Activated naive CD4-positive, alpha-beta T cell treated with anti-CD3 and anti-CD28 coated beads for 36 hours (primary cell): ENCODE measurements at regions of chr15 and their contacts with region 1.

Region 1: GRCh38 chr15:45587095-45587860 is at the start of gene BLOC1S6:
- DNase-seq: peak; percentile 91
- H3K4me3 Mint-ChIP-seq: peak within 1 kb of the TSS; percentile 100
- H3K27ac Mint-ChIP-seq: peak within 1 kb of the TSS; percentile 100
- H3K4me1 Mint-ChIP-seq: peaks cover 41% of the 10 kb centered on the region
- H3K27me3 Mint-ChIP-seq: no peaks in the 10 kb centered on the region
- total RNA-seq, gene BLOC1S6: 36.8 to 42.8 TPM

Region 2: GRCh38 chr15:45429974-45430792 is 157.1 kb before region 1 on chr15:
- CTCF ChIA-PET with region 1: interaction called, 15 read pairs
- intact Hi-C with region 1: no loop called
- DNase-seq: peak; percentile 83
- H3K4me3 Mint-ChIP-seq: peak overlapping the region; percentile 51
- H3K27ac Mint-ChIP-seq: no peak overlapping the region
- H3K4me1 Mint-ChIP-seq: peaks cover 2% of the 10 kb centered on the region
- H3K27me3 Mint-ChIP-seq: peaks cover 4% of the 10 kb centered on the region

Region 3: DNA sequence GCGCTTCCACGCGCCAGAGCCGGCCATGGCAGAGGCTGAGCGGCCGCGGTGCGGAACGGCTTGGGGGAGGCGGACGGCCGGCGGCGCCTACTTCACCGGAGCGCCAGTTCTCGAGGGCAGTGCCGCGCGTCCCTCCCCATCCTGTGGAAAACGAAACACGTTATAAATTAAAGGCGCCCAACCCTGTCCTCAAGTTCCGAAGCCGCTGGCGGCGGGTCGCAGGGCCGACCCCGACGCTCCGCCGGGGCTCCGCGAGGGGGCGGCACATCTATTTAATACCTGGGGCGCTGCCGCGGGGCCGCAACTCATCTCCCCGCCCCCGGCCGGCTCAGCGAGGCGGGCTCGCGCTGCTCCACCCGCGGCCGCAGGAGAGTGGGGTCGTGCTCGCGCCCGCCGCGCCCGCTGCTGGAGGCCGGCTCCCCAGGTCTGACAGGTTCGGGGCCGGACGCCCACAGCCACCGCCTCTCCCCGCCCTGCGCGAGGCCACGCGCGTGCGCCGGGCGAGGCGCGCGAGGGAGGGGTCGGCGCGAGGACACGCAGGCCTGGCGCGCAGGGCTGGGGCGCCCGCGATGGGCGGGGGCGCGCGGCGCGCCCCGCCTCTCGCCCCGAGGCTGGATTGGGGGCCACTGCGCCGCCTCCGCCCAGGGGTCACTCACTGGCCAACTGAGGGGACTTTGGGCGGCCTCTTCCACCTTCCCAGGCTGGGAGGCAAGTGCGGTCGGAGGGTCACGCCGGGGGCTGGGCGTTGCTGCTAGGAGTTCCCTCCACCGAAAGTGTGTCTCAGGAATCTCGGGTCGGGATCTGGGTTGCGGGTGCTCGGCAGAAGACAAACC is 64.7 kb before region 1 on chr15 and contains the start of gene SLC30A4:
- CTCF ChIA-PET with region 1: no interaction called
- intact Hi-C with region 1: loop called (anchors 1 kb)
- DNase-seq: peak; percentile 46
- H3K4me3 Mint-ChIP-seq: peak within 1 kb of the TSS; percentile 89
- H3K27ac Mint-ChIP-seq: no peak within 1 kb of the TSS
- H3K4me1 Mint-ChIP-seq: peaks cover 15% of the 10 kb centered on the region
- H3K27me3 Mint-ChIP-seq: no peaks in the 10 kb centered on the region
- total RNA-seq, gene SLC30A4: 1.0 to 1.2 TPM

Region 4: DNA sequence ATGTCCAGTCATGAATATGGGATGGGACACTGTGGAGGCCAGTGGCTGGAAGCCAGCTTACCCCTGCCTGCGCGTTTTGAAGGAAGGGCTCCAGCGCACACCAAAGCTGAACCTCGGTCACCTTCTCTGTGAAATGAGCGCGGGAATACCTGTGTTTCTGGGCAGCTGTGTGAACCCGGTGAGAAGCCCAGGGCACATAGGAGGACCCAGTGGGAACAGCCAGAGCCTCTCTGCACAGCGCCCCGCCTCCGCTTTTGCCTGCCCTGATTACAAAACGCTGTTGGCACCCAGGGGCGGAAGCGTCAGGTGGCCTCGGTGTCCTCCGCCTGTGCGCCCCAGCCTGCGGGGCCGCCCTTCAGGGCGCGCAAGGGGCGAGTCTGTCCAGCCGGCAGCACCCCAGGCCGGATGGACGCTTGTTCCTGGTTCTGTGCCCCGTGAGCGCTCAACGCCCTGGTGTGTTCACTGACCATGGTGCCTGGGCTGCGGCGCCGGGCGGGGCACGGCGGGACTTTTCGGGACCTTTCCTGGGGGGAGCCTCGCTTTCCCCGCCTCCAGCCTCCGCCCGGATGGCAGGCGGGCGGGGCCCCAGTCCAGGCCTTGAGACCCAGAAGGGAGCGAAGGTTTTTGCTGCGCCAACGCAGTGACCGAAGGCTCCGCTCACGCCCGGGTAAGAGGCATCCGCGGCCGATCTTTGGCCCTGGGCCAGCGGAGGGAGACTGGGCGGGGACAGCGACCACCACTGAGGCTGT is 47.3 kb after region 1 on chr15 and contains the start of gene SQOR:
- CTCF ChIA-PET with region 1: interaction called, 6 read pairs
- intact Hi-C with region 1: loop called (anchors 1 kb)
- DNase-seq: peak; percentile 76
- H3K4me3 Mint-ChIP-seq: peak within 1 kb of the TSS; percentile 99
- H3K27ac Mint-ChIP-seq: peak within 1 kb of the TSS; percentile 86
- H3K4me1 Mint-ChIP-seq: peaks cover 43% of the 10 kb centered on the region
- H3K27me3 Mint-ChIP-seq: no peaks in the 10 kb centered on the region
- total RNA-seq, gene SQOR: 54.3 to 56.4 TPM

Region 5: DNA sequence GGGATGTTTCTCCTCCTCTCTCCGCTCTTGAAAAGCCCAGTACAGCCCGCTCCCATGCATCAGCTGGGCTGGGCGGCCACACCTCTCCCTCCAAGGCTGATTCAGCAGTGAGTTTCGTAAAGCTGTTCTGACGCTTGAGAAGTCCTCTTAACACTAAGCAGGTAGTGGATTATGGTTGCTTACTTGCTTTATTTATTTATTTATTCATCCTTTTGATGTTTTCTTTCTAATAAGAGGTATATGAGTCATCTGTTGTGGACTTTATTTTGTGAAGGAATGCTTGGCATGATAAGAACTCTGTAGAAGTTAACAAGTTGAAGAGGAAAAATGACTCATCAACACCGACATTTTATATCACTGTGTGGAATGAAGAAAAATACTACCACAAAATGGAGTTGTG is 332.5 kb after region 1 on chr15:
- CTCF ChIA-PET with region 1: no interaction called
- intact Hi-C with region 1: no loop called
- DNase-seq: no peak
- H3K4me3 Mint-ChIP-seq: no peak overlapping the region
- H3K27ac Mint-ChIP-seq: no peak overlapping the region
- H3K4me1 Mint-ChIP-seq: no peaks in the 10 kb centered on the region
- H3K27me3 Mint-ChIP-seq: peaks cover 4% of the 10 kb centered on the region